Activated CD4-positive, alpha-beta memory T cell treated with anti-CD3 and anti-CD28 coated beads for 36 hours (primary cell): ENCODE measurements at regions of chr10 and their contacts with region 1.

Region 1: GRCh38 chr10:55263327-55263726 is 462.3 kb upstream of the PCDH15 start:
- DNase-seq: no peak
- H3K4me3 Mint-ChIP-seq: no peak overlapping the region
- H3K27ac Mint-ChIP-seq: no peak overlapping the region
- H3K4me1 Mint-ChIP-seq: no peaks in the 10 kb centered on the region
- H3K27me3 Mint-ChIP-seq: no peaks in the 10 kb centered on the region

Region 2: DNA sequence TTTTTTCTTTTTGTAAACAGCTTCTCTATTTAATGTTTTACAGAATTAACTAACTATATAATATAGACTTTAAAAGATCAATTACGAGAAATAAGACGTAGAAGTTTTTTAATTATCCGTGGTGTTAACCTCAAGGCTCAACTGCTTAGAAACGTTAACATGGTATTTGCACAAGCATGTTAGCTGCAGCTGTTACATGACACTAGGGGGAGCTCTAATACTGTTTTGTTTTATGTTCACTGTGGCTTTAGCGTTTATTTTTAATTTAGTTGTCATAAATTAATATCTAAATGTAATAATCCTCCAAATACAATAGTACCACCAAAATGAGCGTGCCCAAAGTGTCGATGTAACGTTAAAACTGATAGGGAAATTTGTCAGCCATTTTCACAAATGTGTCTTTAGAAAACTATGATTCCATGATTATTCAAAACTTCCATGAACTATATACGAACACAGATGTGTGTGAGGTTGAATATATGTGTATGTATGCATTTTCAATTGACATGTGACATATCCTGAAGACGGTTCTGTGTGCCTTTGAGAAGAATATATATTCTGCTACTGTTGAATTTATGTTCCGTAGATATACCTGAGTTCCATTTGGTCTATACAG is 1662.0 kb before region 1 on chr10:
- CTCF ChIA-PET with region 1: no interaction called
- POLR2A ChIA-PET with region 1: no interaction called
- intact Hi-C with region 1: loop called (anchors 5 kb)
- DNase-seq: no peak
- H3K4me3 Mint-ChIP-seq: no peak overlapping the region
- H3K27ac Mint-ChIP-seq: no peak overlapping the region
- H3K4me1 Mint-ChIP-seq: no peaks in the 10 kb centered on the region
- H3K27me3 Mint-ChIP-seq: no peaks in the 10 kb centered on the region

Region 3: GRCh38 chr10:55224007-55224781 is 39.1 kb before region 1 on chr10:
- CTCF ChIA-PET with region 1: no interaction called
- POLR2A ChIA-PET with region 1: no interaction called
- intact Hi-C with region 1: no loop called
- DNase-seq: no peak
- H3K4me3 Mint-ChIP-seq: no peak overlapping the region
- H3K27ac Mint-ChIP-seq: no peak overlapping the region
- H3K4me1 Mint-ChIP-seq: no peaks in the 10 kb centered on the region
- H3K27me3 Mint-ChIP-seq: no peaks in the 10 kb centered on the region

Region 4: DNA sequence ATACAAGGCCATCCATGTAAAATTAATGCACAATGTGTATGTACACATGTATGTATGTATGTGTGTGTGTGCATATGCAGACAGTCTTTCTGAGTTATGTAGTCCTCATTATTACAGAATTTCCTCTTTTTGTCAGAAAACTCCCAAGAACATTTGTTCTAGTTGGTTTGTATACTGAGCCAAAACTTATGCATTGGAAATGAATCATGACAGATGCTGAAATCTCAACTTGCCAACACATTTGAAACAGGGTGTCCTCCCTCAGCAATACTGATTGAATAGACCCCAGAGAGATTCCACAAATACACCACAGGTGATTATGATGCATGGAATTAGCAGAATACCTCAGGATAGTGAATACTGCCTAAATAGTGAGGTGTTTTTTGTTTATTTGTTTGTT is 10.6 kb after region 1 on chr10:
- CTCF ChIA-PET with region 1: no interaction called
- POLR2A ChIA-PET with region 1: no interaction called
- intact Hi-C with region 1: no loop called
- DNase-seq: no peak
- H3K4me3 Mint-ChIP-seq: no peak overlapping the region
- H3K27ac Mint-ChIP-seq: no peak overlapping the region
- H3K4me1 Mint-ChIP-seq: no peaks in the 10 kb centered on the region
- H3K27me3 Mint-ChIP-seq: no peaks in the 10 kb centered on the region

Region 5: GRCh38 chr10:55476129-55476528 is 212.8 kb after region 1 on chr10:
- CTCF ChIA-PET with region 1: no interaction called
- POLR2A ChIA-PET with region 1: no interaction called
- intact Hi-C with region 1: no loop called
- DNase-seq: no peak
- H3K4me3 Mint-ChIP-seq: no peak overlapping the region
- H3K27ac Mint-ChIP-seq: no peak overlapping the region
- H3K4me1 Mint-ChIP-seq: no peaks in the 10 kb centered on the region
- H3K27me3 Mint-ChIP-seq: no peaks in the 10 kb centered on the region